ENCODE measurements at regions of chr16 and their contacts with region 1.

Region 1: GRCh38 chr16:51834133-51834532 is 683.1 kb upstream of the SALL1 start:
- DNase-seq: no peak

Region 2: DNA sequence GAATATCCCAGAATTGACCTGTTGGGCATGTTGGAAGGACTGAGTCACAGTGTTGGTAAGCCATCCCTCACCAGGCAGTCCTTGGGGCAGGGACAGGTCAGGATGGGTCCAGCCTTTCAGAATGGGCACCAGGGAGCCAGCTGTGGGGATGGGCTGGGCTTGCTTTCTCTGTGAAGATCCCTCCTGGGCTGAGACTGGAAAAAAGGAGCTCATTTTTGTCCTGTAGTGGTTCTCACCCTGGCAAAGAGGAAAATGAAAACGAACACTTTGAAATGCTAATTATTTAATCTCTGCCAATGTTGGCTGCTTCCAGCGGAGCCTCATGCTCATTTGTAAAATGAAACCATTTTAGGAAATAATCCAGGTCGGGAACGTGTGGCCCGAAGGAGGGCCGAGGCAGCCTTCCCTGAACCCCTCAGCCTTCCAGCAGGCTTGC is 445.6 kb before region 1 on chr16:
- intact Hi-C with region 1: loop called (anchors 5 kb)
- DNase-seq: peak in 4 of 10 donors; percentile 10 to 73 (median 28)

Measured in posterior cingulate gyrus (tissue), 11 donors.